WTC11 (cell line): ENCODE measurements at regions of chrX and their contacts with region 1.

Region 1: GRCh38 chrX:152884171-152884570 is 13.7 kb upstream of the ZNF185 start:
- DNase-seq: no peak
- ATAC-seq: peak; percentile 90
- H3K4me3 Mint-ChIP-seq: no peak overlapping the region
- H3K27ac Mint-ChIP-seq: no peak overlapping the region
- H3K4me1 Mint-ChIP-seq: peaks cover 21% of the 10 kb centered on the region
- H3K27me3 Mint-ChIP-seq: peaks cover 6% of the 10 kb centered on the region
- CTCF ChIP-seq: no peak

Region 2: DNA sequence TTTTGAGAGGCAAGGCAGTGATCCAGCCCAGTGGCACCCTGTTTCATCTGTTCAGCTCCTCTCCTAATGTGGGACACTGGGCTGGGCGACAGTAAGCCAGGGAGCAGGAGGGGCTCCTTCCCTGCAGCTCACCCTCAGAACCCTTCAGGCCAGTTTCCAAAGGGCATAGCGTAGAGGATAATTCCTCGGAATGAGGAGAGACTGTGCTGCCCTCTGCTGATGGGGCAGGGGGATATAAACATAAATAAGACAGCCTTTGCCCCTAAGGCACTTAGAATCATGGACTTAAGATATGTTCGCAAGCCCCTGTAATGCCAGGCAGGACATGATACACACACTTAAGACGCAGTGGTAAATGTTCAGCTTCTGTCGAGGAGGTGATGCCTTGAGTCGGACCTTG is 14.2 kb before region 1 on chrX:
- CTCF ChIA-PET with region 1: interaction called, 11 read pairs
- POLR2A ChIA-PET with region 1: no interaction called
- DNase-seq: no peak
- ATAC-seq: peak; percentile 66
- H3K4me3 Mint-ChIP-seq: no peak overlapping the region
- H3K27ac Mint-ChIP-seq: no peak overlapping the region
- H3K4me1 Mint-ChIP-seq: peaks cover 8% of the 10 kb centered on the region; the same call in 1 of the 2 replicates
- H3K27me3 Mint-ChIP-seq: peaks cover 5% of the 10 kb centered on the region; the same call in 1 of the 2 replicates
- CTCF ChIP-seq: no peak

Region 3: GRCh38 chrX:152895724-152896420 is 11.7 kb after region 1 on chrX:
- CTCF ChIA-PET with region 1: interaction called, 11 read pairs
- POLR2A ChIA-PET with region 1: no interaction called
- DNase-seq: no peak
- ATAC-seq: no peak
- H3K4me3 Mint-ChIP-seq: no peak overlapping the region
- H3K27ac Mint-ChIP-seq: no peak overlapping the region
- H3K4me1 Mint-ChIP-seq: peaks cover 51% of the 10 kb centered on the region
- H3K27me3 Mint-ChIP-seq: peaks cover 26% of the 10 kb centered on the region
- CTCF ChIP-seq: no peak

Region 4: DNA sequence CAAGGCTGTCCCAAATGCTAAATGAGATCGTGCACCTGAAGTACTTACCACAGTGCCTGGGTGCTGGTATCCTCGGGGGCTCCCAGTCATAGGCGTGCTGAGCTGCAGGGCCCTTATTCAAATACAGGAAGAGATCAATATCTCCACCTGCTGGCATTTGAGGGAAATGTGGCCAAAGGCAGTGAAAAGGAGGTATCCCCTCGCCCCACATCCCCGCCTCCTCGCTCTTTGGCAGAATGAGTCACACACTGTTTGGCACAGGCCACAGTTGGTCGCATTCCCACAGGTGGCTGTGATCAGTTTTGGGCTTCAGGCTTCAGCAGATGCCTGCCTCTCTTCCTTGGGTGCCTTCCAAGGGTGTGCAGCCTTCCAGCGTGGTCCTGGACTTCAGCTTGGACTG is 42.1 kb after region 1 on chrX:
- CTCF ChIA-PET with region 1: interaction called, 12 read pairs
- POLR2A ChIA-PET with region 1: no interaction called
- DNase-seq: peak; percentile 57
- ATAC-seq: peak; percentile 88
- H3K4me3 Mint-ChIP-seq: no peak overlapping the region
- H3K27ac Mint-ChIP-seq: no peak overlapping the region
- H3K4me1 Mint-ChIP-seq: peaks cover 6% of the 10 kb centered on the region
- H3K27me3 Mint-ChIP-seq: no peaks in the 10 kb centered on the region
- CTCF ChIP-seq: no peak